ENCODE measurements at regions of chr6 and their contacts with region 1.

Region 1: DNA sequence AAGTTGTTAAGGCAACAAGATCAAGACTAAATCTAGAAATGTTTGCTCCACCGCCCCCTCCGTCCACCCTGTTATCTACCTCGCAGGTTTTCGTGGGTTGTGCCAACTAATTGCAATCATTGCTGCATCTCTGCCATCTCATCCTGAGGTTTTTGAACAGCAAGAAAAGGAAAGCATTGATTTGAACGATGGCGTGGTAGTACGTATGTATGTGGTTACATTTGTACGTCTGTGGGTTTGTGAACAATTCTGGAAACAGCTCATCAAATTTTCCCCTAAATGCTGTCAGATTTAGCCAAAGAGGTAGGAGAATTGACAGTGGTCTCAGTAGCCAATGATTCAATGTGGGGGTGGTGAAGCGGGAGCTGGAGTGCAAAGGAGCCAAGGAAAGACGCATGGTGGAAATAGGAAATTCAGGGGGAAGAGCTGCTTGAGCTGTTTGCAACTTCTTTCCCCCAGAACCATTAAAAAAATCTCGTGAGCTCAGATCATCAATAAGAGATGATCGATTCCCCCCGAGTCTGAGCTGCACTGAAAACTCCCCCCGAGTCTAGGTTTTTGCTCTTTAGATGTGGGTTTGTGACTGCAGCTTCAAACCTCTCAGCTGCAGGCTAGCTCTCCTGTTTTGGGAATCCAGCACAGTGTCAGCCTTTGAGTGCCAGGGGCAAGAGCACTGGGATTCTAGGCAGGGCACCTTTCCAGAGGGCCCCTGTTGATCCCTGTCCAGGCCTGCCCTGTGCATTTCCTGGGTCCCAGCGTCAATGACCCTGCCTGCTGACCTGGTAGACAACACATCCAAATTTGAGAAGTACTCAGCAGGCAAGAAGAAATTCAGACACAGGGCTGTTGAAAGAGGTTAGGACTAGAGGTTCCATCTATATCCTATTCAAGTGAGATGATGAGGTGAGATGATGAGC is 72.6 kb upstream of the LY86 start:
- DNase-seq: peak; percentile 84
- ATAC-seq: peak; percentile 89
- H3K4me3 ChIP-seq: no peak overlapping the region
- H3K27ac ChIP-seq: peak overlapping the region; percentile 34
- H3K4me1 ChIP-seq: peaks cover 26% of the 10 kb centered on the region
- H3K27me3 ChIP-seq: no peaks in the 10 kb centered on the region
- CTCF ChIP-seq: no peak
- EP300 ChIP-seq: peak; percentile 82 to 96
- POLR2A ChIP-seq: no peak
- RAD21 ChIP-seq: no peak

Region 2: DNA sequence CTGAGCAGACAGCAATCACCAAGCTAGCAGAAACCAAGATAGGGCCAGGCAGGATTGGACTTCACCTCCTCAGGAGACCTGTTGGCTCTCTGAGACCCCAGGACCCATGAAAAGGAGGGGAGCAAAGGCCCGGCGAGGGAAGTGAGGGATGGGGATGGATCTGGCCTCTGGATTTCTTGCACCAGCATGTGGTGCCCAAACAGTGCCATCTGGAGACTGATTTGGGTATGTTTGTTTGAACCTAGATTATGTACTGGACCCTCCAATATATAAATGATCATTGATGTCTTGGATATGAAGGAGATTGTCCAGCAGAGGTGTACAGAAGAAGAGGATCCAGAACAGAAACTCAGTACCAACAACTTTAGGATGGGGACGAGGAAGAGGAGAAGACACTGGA is 10.8 kb before region 1 on chr6:
- CTCF ChIA-PET with region 1: interaction called, 6 read pairs
- POLR2A ChIA-PET with region 1: no interaction called
- RAD21 ChIA-PET with region 1: interaction called, 3 read pairs
- SMC1A ChIA-PET with region 1: interaction called, 17 read pairs
- in situ Hi-C with region 1: no loop called
- intact Hi-C with region 1: no loop called
- DNase-seq: no peak
- ATAC-seq: no peak; the same call in 2 of the 3 replicates
- H3K4me3 ChIP-seq: no peak overlapping the region
- H3K27ac ChIP-seq: no peak overlapping the region
- H3K4me1 ChIP-seq: no peaks in the 10 kb centered on the region; the same call in 1 of the 2 replicates
- H3K27me3 ChIP-seq: no peaks in the 10 kb centered on the region
- CTCF ChIP-seq: no peak
- EP300 ChIP-seq: no peak
- POLR2A ChIP-seq: no peak
- RAD21 ChIP-seq: 0 out of 2 replicates have a peak, but pooled peaks have one; percentile 16